ENCODE measurements at regions of chr6 and their contacts with region 1.

Region 1: GRCh38 chr6:52577022-52577777 is at the start of gene TRAM2:
- DNase-seq: peak; percentile 62 to 89 (median 77)
- ATAC-seq: peak; percentile 78
- H3K4me3 ChIP-seq: peak within 1 kb of the TSS; percentile 81 to 82
- H3K4me3 Mint-ChIP-seq: peak within 1 kb of the TSS; percentile 87
- H3K27ac ChIP-seq: peak within 1 kb of the TSS; percentile 58
- H3K27ac Mint-ChIP-seq: peak within 1 kb of the TSS; percentile 87
- H3K4me1 ChIP-seq: peaks cover 44% of the 10 kb centered on the region
- H3K4me1 Mint-ChIP-seq: peaks cover 49% of the 10 kb centered on the region
- H3K27me3 ChIP-seq: no peaks in the 10 kb centered on the region
- H3K27me3 Mint-ChIP-seq: no peaks in the 10 kb centered on the region
- CTCF ChIP-seq: no peak
- total RNA-seq, gene TRAM2: 4.6 to 4.9 TPM

Region 2: GRCh38 chr6:52664186-52664990 is 87.2 kb after region 1 on chr6:
- CTCF ChIA-PET with region 1: interaction called, 3 read pairs
- POLR2A ChIA-PET with region 1: no interaction called
- intact Hi-C with region 1: loop called in 1 of 2 experiments (anchors 5 kb)
- DNase-seq: peak; percentile 5 to 70 (median 45)
- ATAC-seq: peak; percentile 66
- H3K4me3 ChIP-seq: peak overlapping the region; percentile 61 to 82
- H3K4me3 Mint-ChIP-seq: no peak overlapping the region
- H3K27ac ChIP-seq: no peak overlapping the region
- H3K27ac Mint-ChIP-seq: no peak overlapping the region
- H3K4me1 ChIP-seq: peaks cover 14% of the 10 kb centered on the region
- H3K4me1 Mint-ChIP-seq: no peaks in the 10 kb centered on the region
- H3K27me3 ChIP-seq: peaks cover 0 to 10% of the 10 kb centered on the region in 2 experiments
- H3K27me3 Mint-ChIP-seq: no peaks in the 10 kb centered on the region
- CTCF ChIP-seq: no peak

Region 3: GRCh38 chr6:52995913-52996645 is 418.9 kb after region 1 on chr6:
- CTCF ChIA-PET with region 1: no interaction called
- POLR2A ChIA-PET with region 1: no interaction called
- intact Hi-C with region 1: loop called (anchors 5 kb)
- DNase-seq: peak in 7 of 9 experiments; percentile 27 to 74 (median 54)
- ATAC-seq: peak; percentile 8
- H3K4me3 ChIP-seq: peak overlapping the region; percentile 41 to 75
- H3K4me3 Mint-ChIP-seq: peak overlapping the region; percentile 94
- H3K27ac ChIP-seq: peak overlapping the region; percentile 57 to 100
- H3K27ac Mint-ChIP-seq: peak overlapping the region; percentile 99
- H3K4me1 ChIP-seq: peaks cover 6% of the 10 kb centered on the region
- H3K4me1 Mint-ChIP-seq: peaks cover 22% of the 10 kb centered on the region
- H3K27me3 ChIP-seq: no peaks in the 10 kb centered on the region
- H3K27me3 Mint-ChIP-seq: peaks cover 7% of the 10 kb centered on the region
- CTCF ChIP-seq: no peak

Region 4: DNA sequence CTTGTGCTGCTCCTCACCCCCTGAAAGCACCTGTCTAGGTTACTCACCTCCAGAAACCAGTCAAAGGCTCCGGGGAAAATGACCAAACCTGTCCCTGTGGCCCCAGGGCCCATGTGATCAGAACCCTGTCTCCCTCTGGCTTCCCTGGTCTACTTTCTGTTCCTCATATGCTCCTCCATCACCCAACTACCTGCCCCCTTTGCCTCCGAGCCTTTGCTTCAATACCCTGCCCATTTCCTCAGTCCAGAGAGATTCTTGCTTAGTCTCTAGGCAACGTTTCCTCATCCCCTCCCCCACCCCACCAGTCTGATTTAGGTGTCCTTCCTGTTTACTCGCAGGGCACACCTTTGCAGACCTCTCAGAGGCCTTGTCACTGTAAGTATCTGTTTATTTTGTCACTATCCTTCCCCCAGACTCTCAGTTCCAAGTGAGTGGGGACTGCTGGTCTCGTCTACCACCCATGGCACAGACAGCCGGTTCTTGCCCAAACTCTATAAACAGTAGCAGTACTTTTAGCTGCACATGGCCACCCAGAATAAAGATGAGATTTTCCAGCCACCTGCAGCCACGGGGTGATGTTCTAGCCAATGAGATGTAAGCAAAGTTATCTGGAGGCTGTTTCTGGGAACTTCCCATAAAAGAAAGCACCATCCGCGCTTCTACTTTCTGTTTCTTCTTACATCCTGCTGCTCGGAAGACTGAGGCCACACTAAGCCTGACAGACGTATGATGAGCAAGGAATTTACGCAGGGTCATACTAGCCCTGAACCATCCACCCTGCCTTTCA is 758.2 kb after region 1 on chr6:
- CTCF ChIA-PET with region 1: no interaction called
- POLR2A ChIA-PET with region 1: no interaction called
- intact Hi-C with region 1: loop called in 1 of 2 experiments (anchors 5 kb)
- DNase-seq: peak; percentile 52 to 94 (median 76)
- ATAC-seq: peak; percentile 83
- H3K4me3 ChIP-seq: peak overlapping the region; percentile 38 to 54
- H3K4me3 Mint-ChIP-seq: peak overlapping the region; percentile 84
- H3K27ac ChIP-seq: peak overlapping the region; percentile 82 to 98
- H3K27ac Mint-ChIP-seq: peak overlapping the region; percentile 98
- H3K4me1 ChIP-seq: peaks cover 76% of the 10 kb centered on the region
- H3K4me1 Mint-ChIP-seq: peaks cover 91% of the 10 kb centered on the region
- H3K27me3 ChIP-seq: no peaks in the 10 kb centered on the region
- H3K27me3 Mint-ChIP-seq: no peaks in the 10 kb centered on the region
- CTCF ChIP-seq: no peak

Region 5: GRCh38 chr6:53651764-53652401 is 1074.7 kb after region 1 on chr6:
- CTCF ChIA-PET with region 1: no interaction called
- POLR2A ChIA-PET with region 1: no interaction called
- intact Hi-C with region 1: loop called in 1 of 2 experiments (anchors 10 kb)
- DNase-seq: peak; percentile 57 to 91 (median 79)
- ATAC-seq: peak; percentile 86
- H3K4me3 ChIP-seq: peak overlapping the region; percentile 67 to 81
- H3K4me3 Mint-ChIP-seq: peak overlapping the region; percentile 91
- H3K27ac ChIP-seq: peak overlapping the region; percentile 54 to 65
- H3K27ac Mint-ChIP-seq: peak overlapping the region; percentile 89
- H3K4me1 ChIP-seq: peaks cover 32% of the 10 kb centered on the region
- H3K4me1 Mint-ChIP-seq: peaks cover 32% of the 10 kb centered on the region
- H3K27me3 ChIP-seq: no peaks in the 10 kb centered on the region
- H3K27me3 Mint-ChIP-seq: no peaks in the 10 kb centered on the region
- CTCF ChIP-seq: no peak

Measured in CD8-positive, alpha-beta T cell (primary cell).